Activated CD4-positive, alpha-beta T cell treated with anti-CD3 and anti-CD28 coated beads, Interleukin-2, amount 10 ng/mL, durations not matched to agents 24 days and 14 days (primary cell): ENCODE measurements at regions of chr2 and their contacts with region 1.

Region 1: DNA sequence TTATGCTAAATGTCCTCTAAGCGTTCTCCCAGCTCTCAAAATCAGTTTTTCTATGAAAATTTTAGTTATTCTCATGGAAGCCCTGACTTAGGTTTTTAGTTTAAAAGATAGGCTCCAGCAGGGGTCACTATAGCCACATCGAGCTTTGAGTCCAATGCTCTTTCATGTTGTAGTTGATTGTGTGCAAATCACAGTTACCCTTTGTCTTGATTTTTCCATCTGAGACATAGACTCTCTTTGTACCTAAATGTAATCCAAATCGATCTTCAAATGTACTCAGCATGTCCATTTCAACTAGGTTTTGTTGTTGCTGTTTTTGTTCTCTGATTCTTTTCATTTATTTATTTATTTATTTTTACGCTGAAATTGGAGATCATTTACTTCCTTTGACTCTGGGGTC is 26.4 kb upstream of the MSTN start:
- DNase-seq: peak; percentile 84
- H3K4me3 Mint-ChIP-seq: no peak overlapping the region
- H3K27ac Mint-ChIP-seq: no peak overlapping the region
- H3K4me1 Mint-ChIP-seq: no peaks in the 10 kb centered on the region
- H3K27me3 Mint-ChIP-seq: peaks cover 5% of the 10 kb centered on the region

Region 2: GRCh38 chr2:190069936-190070696 is 18.8 kb before region 1 on chr2:
- intact Hi-C with region 1: no loop called
- DNase-seq: peak; percentile 75
- H3K4me3 Mint-ChIP-seq: no peak overlapping the region
- H3K27ac Mint-ChIP-seq: no peak overlapping the region
- H3K4me1 Mint-ChIP-seq: no peaks in the 10 kb centered on the region
- H3K27me3 Mint-ChIP-seq: peaks cover 5% of the 10 kb centered on the region

Region 3: DNA sequence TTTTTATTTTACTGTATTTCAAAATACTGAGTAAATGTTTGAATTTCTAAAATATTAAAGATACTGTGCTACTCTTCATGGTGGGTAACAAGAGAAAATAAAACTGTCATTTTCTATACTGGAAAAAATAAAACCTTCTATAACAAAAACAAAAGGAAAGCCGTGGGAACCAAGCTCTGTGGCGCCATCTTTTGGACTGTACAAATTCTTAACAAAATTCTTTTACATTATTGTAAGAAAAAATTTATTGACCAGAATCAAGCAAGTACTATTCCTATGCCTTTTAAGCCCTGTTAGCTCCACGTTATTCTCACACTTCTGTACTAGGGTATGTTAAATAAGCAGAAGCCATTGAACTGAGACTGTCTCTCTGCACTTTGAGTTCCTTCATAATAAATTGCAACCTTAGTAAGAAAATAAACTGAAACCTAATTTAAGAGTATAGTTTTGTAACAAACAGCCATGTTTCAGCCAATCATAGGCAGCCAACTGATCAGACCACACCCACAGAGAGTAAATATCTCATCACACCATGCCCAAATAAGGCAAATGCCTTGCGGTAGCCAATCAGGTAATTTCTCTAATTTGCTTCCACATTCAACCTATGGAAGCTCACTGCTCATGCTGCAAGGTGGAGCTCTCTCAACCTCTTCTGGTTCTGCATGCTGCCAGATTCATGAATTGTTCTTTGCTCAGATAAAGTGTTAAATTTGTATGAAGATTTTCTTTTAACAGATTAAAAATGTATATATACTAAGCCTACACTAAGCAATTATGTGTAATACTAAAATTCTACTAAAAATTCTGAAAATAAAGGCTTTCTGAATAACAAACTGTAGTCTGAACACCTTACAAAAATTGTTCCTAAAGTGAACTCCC is 188.6 kb after region 1 on chr2:
- intact Hi-C with region 1: loop called (anchors 1 kb)
- DNase-seq: peak; percentile 67
- H3K4me3 Mint-ChIP-seq: no peak overlapping the region
- H3K27ac Mint-ChIP-seq: no peak overlapping the region
- H3K4me1 Mint-ChIP-seq: peaks cover 2% of the 10 kb centered on the region
- H3K27me3 Mint-ChIP-seq: no peaks in the 10 kb centered on the region

Region 4: DNA sequence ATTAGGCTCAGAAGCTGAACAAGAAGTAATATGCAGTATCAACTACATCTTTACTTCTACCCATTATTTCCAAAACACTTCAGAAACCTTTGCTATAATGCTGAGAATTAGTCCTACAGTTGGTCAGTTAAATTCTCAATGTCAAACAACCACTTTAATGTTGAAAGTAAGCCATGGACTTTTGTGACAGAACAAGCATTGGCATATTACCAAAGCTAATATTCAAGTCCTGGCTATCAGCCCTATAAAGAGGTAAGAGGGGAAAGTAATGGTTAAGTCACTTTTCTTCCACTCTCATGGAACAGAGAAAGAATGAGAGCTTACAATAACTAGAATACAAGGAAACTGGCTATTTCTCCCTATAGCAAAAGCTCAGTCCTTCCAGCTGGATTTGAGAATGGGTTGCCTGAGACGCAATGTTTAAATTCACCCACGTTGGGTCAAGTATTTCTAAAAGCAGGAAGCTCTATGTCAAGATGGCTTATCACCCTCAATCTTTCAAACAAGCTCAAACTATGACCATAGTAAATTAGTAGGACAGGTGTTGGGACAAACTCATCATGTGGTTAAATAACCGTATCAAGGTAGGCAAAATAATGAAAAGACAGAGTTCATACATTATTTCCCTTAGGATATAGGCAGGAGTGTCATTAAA is 287.8 kb after region 1 on chr2:
- intact Hi-C with region 1: loop called (anchors 1 kb)
- DNase-seq: no peak
- H3K4me3 Mint-ChIP-seq: no peak overlapping the region
- H3K27ac Mint-ChIP-seq: no peak overlapping the region
- H3K4me1 Mint-ChIP-seq: no peaks in the 10 kb centered on the region
- H3K27me3 Mint-ChIP-seq: peaks cover 4% of the 10 kb centered on the region